Esophagus squamous epithelium (tissue), 5 donors: ENCODE measurements at regions of chr19 and their contacts with region 1.

Region 1: DNA sequence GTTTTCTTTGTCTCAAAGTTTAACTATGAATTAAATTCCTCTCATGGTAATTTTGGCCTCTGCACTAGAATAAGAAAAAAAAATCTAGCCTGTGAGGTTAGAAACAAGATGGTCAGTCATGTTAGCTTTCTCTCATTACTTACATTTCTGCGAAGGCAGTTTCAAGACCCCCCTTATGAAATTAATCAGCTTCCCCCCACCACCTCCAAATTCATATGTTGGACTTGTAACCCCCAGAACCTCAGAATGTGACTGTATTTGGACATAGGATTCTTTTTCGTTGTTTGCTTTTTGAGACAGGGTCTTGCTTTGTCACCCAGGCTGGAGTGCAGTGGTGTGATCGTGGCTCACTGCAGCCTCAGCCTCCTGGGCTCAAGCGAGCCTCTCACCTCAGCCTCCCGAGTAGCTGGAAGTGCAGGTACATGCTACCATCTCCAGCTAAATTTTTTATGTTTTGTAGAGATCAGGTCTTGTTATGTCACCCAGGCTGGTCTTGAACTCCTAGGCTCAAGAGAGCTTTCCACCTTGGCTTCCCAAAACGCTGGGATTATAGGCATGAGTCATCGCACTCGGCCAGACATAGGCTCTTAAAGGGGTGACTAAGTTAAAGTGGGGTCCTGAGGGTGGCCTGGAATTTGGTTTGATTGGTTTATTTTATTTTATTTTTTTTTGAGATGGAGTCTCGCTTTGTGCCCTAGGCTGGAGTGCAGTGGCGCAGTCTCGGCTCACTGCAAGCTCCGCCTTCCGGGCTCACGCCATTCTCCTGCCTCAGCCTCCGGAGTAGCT is 1.4 kb downstream of the PLA2G4C start:
- DNase-seq: no peak
- H3K4me3 ChIP-seq: no peak overlapping the region
- H3K27ac ChIP-seq: no peak overlapping the region
- H3K4me1 ChIP-seq: peaks cover 0 to 36% (median 23%) of the 10 kb centered on the region in 3 donors
- H3K27me3 ChIP-seq: no peaks in the 10 kb centered on the region
- CTCF ChIP-seq: no peak
- POLR2A ChIP-seq: no peak

Region 2: GRCh38 chr19:48149430-48149829 is 40.2 kb after region 1 on chr19:
- intact Hi-C with region 1: loop called (anchors 5 kb)
- DNase-seq: no peak
- H3K4me3 ChIP-seq: no peak overlapping the region
- H3K27ac ChIP-seq: no peak overlapping the region
- H3K4me1 ChIP-seq: no peaks in the 10 kb centered on the region
- H3K27me3 ChIP-seq: no peaks in the 10 kb centered on the region
- CTCF ChIP-seq: no peak
- POLR2A ChIP-seq: no peak